ENCODE measurements at regions of chr2 and their contacts with region 1.

Region 1: GRCh38 chr2:160294339-160294803 is 94.3 kb upstream of the ITGB6 start:
- DNase-seq: no peak
- H3K4me3 Mint-ChIP-seq: no peak overlapping the region
- H3K27ac Mint-ChIP-seq: peak overlapping the region; percentile 1
- H3K4me1 Mint-ChIP-seq: peaks cover 72% of the 10 kb centered on the region
- H3K27me3 Mint-ChIP-seq: no peaks in the 10 kb centered on the region

Region 2: DNA sequence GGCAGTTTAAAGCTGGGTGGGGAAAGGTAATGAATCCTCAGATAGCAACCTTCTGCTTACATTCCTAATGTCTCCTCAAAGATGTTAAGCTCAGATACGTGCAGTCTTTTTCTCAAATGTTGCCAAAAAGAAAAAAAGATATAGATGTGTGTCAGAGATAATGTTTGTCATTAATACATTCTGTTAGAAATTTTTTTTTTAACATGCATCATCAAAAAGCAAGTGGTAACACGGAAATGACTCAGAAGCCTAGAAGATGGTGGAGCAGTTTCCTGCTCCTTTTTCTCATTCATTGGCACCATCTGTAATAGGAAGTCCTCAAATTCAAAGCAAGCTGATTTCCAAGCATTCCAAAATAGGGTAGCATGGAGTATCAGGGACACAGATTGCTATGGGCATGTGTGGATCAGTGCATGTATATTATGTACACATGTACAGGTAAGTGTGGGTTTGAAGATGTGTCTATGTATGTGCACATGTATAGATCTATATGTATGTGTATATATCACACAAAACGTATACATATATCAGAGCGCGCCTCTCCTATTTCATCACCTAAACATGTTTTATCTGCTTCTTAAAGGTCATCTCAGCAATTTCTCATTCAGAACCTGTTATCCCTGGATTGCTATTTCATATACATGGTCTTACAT is 14.4 kb before region 1 on chr2:
- intact Hi-C with region 1: loop called (anchors 2 kb)
- DNase-seq: no peak
- H3K4me3 Mint-ChIP-seq: no peak overlapping the region
- H3K27ac Mint-ChIP-seq: peak overlapping the region; percentile 16
- H3K4me1 Mint-ChIP-seq: peaks cover 19% of the 10 kb centered on the region
- H3K27me3 Mint-ChIP-seq: no peaks in the 10 kb centered on the region

Region 3: DNA sequence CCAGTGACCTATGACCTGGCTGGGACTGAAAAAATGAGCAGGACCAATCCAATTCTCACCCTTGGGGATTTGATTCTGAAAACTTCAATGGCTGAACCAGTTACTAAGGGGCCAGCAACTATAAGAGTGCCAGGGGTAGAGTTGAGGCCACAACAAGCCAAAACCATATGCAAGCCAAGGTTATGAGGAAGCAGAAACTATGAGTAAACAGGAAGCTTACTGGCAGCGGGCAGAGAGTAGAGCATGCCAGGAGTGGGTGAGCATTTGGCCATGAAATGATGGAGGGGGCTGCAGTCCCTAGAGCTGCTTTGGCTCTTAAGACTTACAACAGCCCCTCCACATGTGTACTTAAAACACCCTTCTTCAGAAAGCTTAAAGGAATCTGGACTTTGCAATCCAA is 116.8 kb after region 1 on chr2:
- intact Hi-C with region 1: no loop called
- DNase-seq: no peak
- H3K4me3 Mint-ChIP-seq: peak overlapping the region; percentile 70
- H3K27ac Mint-ChIP-seq: peak overlapping the region; percentile 65
- H3K4me1 Mint-ChIP-seq: peaks cover 70% of the 10 kb centered on the region
- H3K27me3 Mint-ChIP-seq: no peaks in the 10 kb centered on the region

Region 4: DNA sequence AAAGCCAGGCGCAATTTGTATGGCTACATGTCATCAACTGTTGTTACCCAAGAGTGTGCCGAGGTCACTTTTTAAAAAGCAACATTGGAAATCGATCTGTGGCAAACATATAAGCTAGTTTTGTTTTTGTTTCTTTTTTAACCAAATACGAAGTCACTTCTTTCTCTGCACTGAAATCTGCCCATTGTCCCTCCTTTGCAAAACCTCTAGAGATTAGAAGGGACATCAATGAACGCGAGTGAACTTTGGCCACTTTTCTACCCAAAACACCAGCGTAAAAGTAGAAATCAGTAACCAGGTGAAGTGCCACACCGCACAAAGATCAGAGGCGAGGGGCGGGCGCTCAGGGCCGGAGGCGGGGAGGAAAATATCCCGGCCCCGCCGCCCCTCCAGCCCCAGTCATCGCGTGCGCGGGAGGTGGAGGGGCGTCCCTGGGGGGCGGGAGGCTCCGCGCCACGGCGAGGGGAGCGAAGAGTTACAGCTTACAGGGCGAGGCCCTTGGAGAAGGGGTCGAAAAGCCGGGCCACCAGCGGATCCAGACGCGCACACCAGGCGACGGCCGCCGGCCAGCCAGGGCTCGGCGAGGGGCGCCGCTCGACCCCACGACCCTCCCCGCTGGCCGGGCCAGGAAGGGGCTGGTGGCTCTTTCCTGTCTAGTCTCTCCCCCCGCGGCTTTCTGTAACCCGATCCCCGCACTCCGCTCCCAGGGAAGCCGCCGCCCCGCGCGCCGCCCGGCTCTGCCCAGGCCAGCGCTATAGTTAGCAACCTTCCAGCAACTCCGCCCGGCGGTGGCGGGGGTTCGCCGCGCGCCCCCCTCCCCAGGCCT is 198.2 kb after region 1 on chr2:
- intact Hi-C with region 1: no loop called
- DNase-seq: peak; percentile 48
- H3K4me3 Mint-ChIP-seq: peak overlapping the region; percentile 97
- H3K27ac Mint-ChIP-seq: peak overlapping the region; percentile 97
- H3K4me1 Mint-ChIP-seq: peaks cover 52% of the 10 kb centered on the region
- H3K27me3 Mint-ChIP-seq: peaks cover 9% of the 10 kb centered on the region

Measured in activated T-helper 1 cell treated with anti-CD3 and anti-CD28 coated beads, Interleukin-12 subunit alpha, Interleukin-12 subunit beta, Interleukin-2, Interleukin-4 antibody, amounts not matched to agents 30 ng/mL and 10 ng/mL and 1 ng/mL, durations not matched to agents 14 hours and 24 hours and 36 hours (primary cell).